ENCODE measurements at regions of chr3 and their contacts with region 1.

Region 1: DNA sequence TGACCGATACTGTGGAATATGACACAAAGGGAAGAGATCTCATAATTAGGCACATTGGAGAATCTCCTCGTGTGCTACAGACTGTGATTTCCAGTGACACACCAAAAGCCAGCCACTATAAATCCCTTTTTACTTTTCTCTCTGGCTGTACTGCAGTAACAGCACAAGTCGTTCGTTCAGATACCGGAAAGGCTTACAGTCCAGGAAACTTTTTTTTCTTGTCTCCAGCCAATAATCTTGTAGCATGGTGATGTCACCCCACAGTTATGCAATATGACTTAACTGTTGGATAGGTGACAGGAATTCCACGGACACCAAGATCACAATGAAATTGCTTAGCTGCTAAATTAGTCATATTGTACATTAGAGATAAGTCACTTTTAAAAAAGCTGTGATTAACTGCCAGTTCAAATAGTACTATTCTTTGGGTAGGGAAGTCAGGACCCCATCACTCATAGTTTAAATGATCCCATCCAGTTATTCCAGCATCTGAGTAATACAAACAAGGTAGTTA is 36.3 kb upstream of the TSC22D2 start:
- DNase-seq: peak; percentile 99
- ATAC-seq: peak; percentile 50
- H3K4me3 ChIP-seq: peak overlapping the region; percentile 38
- H3K27ac ChIP-seq: peak overlapping the region; percentile 92
- H3K4me1 ChIP-seq: peaks cover 9% of the 10 kb centered on the region
- H3K27me3 ChIP-seq: no peaks in the 10 kb centered on the region
- CTCF ChIP-seq: no peak
- POLR2A ChIP-seq: peak; percentile 75; the same call in 1 of the 2 replicates
- RAD21 ChIP-seq: no peak

Region 2: GRCh38 chr3:150227839-150228238 is 144.0 kb before region 1 on chr3:
- CTCF ChIA-PET with region 1: no interaction called
- POLR2A ChIA-PET with region 1: no interaction called
- dilution Hi-C with region 1: no loop called
- in situ Hi-C with region 1: no loop called
- intact Hi-C with region 1: loop called (anchors 1 kb)
- DNase-seq: peak; percentile 69
- ATAC-seq: peak; percentile 93
- H3K4me3 ChIP-seq: no peak overlapping the region
- H3K27ac ChIP-seq: no peak overlapping the region
- H3K4me1 ChIP-seq: no peaks in the 10 kb centered on the region
- H3K27me3 ChIP-seq: no peaks in the 10 kb centered on the region
- CTCF ChIP-seq: peak; percentile 87
- POLR2A ChIP-seq: no peak
- RAD21 ChIP-seq: peak; percentile 89

Region 3: GRCh38 chr3:150237490-150237889 is 134.3 kb before region 1 on chr3:
- CTCF ChIA-PET with region 1: no interaction called
- POLR2A ChIA-PET with region 1: no interaction called
- dilution Hi-C with region 1: no loop called
- in situ Hi-C with region 1: no loop called
- intact Hi-C with region 1: loop called (anchors 2 kb)
- DNase-seq: peak; percentile 73
- ATAC-seq: no peak
- H3K4me3 ChIP-seq: no peak overlapping the region
- H3K27ac ChIP-seq: no peak overlapping the region
- H3K4me1 ChIP-seq: peaks cover 22% of the 10 kb centered on the region
- H3K27me3 ChIP-seq: no peaks in the 10 kb centered on the region
- CTCF ChIP-seq: no peak
- POLR2A ChIP-seq: no peak
- RAD21 ChIP-seq: no peak

Region 4: DNA sequence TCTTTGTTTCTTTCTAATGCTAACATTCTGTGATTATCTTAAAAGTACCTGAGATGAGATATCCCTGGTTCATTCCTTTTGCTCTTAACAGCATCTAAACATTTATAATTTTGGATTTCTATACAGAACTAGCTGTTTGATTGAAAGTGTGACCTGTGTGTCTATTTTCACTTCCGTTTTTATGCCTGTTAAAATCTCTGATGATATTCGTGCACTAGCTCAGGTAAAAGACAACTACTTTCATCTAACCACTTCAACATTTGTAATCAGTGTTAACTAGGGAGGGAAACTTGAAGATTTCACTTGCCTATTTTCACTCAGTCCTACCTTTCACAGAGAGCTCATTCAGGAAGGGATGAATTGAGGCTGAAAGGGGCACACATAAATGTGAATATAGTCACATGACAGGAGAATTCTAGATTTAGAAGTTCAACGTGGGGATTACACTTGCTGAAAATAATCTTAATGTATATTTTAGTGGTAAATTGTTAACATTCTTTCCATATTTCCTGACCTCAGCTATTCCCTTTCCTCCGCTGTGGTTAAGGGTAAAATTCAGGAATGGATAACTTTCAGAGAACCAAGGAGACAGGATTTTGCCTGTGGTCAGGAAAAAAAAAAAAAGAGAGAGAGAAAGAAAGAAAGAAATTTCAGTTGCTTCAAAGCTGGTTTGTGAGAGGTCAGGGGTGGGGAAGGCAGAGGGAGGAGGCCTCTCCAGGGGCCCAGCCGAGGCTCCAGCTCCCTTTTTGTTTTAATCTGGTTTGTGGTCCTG is 123.5 kb before region 1 on chr3:
- CTCF ChIA-PET with region 1: interaction called, 3 read pairs
- POLR2A ChIA-PET with region 1: no interaction called
- dilution Hi-C with region 1: no loop called
- in situ Hi-C with region 1: no loop called
- intact Hi-C with region 1: loop called (anchors 2 kb)
- DNase-seq: peak; percentile 94
- ATAC-seq: peak; percentile 85
- H3K4me3 ChIP-seq: no peak overlapping the region
- H3K27ac ChIP-seq: peak overlapping the region; percentile 97
- H3K4me1 ChIP-seq: peaks cover 25% of the 10 kb centered on the region
- H3K27me3 ChIP-seq: no peaks in the 10 kb centered on the region
- CTCF ChIP-seq: no peak
- POLR2A ChIP-seq: no peak
- RAD21 ChIP-seq: no peak

Region 5: GRCh38 chr3:150293401-150294061 is 78.3 kb before region 1 on chr3:
- CTCF ChIA-PET with region 1: no interaction called
- POLR2A ChIA-PET with region 1: no interaction called
- dilution Hi-C with region 1: no loop called
- in situ Hi-C with region 1: no loop called
- intact Hi-C with region 1: loop called (anchors 2 kb)
- DNase-seq: peak; percentile 81
- ATAC-seq: peak; percentile 81
- H3K4me3 ChIP-seq: no peak overlapping the region
- H3K27ac ChIP-seq: peak overlapping the region; percentile 60
- H3K4me1 ChIP-seq: peaks cover 11% of the 10 kb centered on the region
- H3K27me3 ChIP-seq: no peaks in the 10 kb centered on the region
- CTCF ChIP-seq: no peak
- POLR2A ChIP-seq: no peak
- RAD21 ChIP-seq: no peak

Region 6: GRCh38 chr3:150360966-150361365 is 10.8 kb before region 1 on chr3:
- CTCF ChIA-PET with region 1: no interaction called
- POLR2A ChIA-PET with region 1: no interaction called
- dilution Hi-C with region 1: no loop called
- in situ Hi-C with region 1: no loop called
- intact Hi-C with region 1: no loop called
- DNase-seq: no peak
- ATAC-seq: no peak
- H3K4me3 ChIP-seq: no peak overlapping the region
- H3K27ac ChIP-seq: no peak overlapping the region
- H3K4me1 ChIP-seq: peaks cover 2% of the 10 kb centered on the region; the same call in 1 of the 2 replicates
- H3K27me3 ChIP-seq: no peaks in the 10 kb centered on the region
- CTCF ChIP-seq: no peak
- POLR2A ChIP-seq: no peak
- RAD21 ChIP-seq: no peak

Region 7: DNA sequence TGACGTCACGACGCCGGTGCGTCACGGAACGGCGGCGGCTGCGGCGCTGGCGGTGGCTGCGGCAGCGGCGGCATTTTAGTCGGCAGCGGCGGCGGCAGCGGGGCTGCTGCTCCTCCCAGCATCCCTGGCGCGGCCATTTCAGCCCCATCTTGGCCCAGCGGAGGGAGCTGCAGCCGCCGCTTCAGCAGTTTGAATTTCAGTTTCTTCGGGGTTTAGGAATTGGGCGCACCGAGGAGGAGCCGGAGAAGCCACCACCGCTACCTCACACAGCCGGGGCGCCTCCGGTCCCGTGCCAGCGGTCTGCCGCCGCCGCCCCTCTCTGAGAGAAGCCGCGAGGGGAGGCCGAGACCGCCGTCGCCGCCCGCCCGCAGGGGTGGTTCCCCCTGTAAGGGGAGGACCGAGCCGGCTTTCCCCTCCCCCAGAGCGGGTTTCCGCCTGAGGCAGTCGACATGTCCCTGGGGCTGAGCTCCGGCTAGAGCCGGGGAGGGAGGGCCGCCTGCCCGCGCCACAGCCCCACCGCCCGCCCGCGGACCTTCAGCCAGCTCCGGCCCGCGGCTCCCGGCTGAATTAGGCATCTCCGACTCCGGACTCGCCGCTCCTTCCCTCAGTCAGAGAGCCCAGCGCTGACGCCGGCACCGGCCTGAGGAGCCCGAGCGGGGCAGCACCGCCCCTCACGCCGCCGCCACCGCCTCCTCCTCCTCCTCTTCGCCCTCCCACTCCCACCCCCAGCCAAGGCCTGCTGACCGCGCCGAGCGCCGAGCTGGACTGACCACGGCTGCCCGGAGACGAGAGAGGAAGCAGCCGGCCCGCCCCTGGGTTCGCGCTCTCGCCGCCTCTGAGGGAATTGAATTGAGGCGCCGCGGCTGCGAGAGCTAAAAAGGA is 36.7 kb after region 1 on chr3 and contains the start of gene TSC22D2:
- CTCF ChIA-PET with region 1: interaction called, 3 read pairs
- POLR2A ChIA-PET with region 1: no interaction called
- dilution Hi-C with region 1: no loop called
- in situ Hi-C with region 1: no loop called
- intact Hi-C with region 1: loop called (anchors 1 kb)
- DNase-seq: peak; percentile 92
- ATAC-seq: peak; percentile 81
- H3K4me3 ChIP-seq: peak within 1 kb of the TSS; percentile 76
- H3K27ac ChIP-seq: peak within 1 kb of the TSS; percentile 97
- H3K4me1 ChIP-seq: no peaks in the 10 kb centered on the region
- H3K27me3 ChIP-seq: no peaks in the 10 kb centered on the region
- CTCF ChIP-seq: peak; percentile 31
- POLR2A ChIP-seq: peak; percentile 94
- RAD21 ChIP-seq: no peak; the same call in 1 of the 2 replicates
- total RNA-seq, gene TSC22D2: 12.2 and 15.8 TPM in 2 replicates

Measured in IMR-90 (cell line).